Psoas muscle (tissue), 8 donors: ENCODE measurements at regions of chr11 and their contacts with region 1.

Region 1: DNA sequence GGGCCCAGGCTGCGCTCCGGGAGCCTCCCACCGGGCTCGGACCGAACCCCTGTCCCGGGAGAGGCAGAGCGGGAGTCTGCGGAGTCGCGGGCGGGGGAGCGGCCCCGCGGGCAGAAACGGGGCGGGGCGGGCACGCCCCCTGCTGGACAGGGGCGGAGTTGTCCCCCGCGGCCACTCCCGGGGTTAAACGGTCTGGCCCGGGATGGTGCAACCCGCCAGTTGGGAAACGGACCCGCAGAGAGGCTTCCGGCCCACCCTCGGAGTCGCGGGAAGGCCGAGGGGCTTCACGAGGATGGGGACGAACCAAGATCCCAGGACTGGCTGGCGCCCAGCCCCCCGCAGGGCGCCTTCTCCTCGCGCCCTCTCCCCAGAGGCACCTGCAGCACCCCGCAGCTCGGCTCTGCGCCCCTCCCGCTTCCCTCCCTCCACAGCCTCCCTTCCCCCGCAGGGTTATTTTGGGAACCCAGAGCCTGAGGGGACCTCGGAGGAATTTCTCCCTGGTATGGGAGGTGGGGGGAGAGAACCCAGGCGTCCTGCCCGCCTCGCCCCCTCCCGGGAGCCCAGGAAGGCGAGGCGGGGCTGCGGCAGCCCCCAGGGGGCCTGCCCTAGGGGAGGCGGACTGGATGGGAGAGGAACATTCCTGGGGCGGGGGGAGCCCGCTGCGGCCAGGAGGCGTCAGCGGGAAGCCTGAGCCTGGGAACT is 902 bp downstream of the RASGRP2 start:
- DNase-seq: peak; percentile 87 to 93
- ATAC-seq: peak; percentile 61 to 79 (median 74)
- H3K4me3 ChIP-seq: peak overlapping the region; percentile 76
- H3K27ac ChIP-seq: peak overlapping the region; percentile 82
- H3K4me1 ChIP-seq: peaks cover 44% of the 10 kb centered on the region
- H3K27me3 ChIP-seq: no peaks in the 10 kb centered on the region
- CTCF ChIP-seq: peak; percentile 91

Region 2: DNA sequence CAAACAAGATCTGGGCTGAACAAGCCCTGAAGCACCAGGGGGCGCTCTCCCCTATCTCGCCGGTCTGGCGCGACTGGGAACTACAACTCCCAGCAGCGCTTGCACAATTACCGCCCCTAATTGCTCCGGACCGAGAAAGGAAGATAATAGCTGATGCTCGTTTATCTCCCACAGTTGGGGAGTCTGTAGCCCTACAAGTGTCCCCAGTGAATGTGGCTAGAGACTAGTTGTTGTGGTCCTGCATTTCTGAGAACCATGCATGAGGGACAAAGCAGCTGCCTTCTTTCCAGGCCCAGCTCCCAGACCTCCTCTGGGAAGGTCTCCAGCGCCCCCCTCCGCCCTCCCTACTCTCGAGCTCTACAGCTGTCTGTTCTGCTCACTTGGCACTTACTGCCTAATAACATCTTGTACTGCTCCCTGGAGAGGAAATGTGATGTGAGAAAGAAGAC is 54.5 kb before region 1 on chr11:
- intact Hi-C with region 1: loop called in 1 of 2 experiments (anchors 5 kb)
- DNase-seq: peak; percentile 91 to 95
- ATAC-seq: peak; percentile 91 to 94 (median 92)
- H3K4me3 ChIP-seq: peak overlapping the region; percentile 63
- H3K27ac ChIP-seq: peak overlapping the region; percentile 71
- H3K4me1 ChIP-seq: peaks cover 18% of the 10 kb centered on the region
- H3K27me3 ChIP-seq: no peaks in the 10 kb centered on the region
- CTCF ChIP-seq: peak; percentile 91